Posterior cingulate gyrus (tissue), 11 donors: ENCODE measurements at regions of chr13 and their contacts with region 1.

Region 1: DNA sequence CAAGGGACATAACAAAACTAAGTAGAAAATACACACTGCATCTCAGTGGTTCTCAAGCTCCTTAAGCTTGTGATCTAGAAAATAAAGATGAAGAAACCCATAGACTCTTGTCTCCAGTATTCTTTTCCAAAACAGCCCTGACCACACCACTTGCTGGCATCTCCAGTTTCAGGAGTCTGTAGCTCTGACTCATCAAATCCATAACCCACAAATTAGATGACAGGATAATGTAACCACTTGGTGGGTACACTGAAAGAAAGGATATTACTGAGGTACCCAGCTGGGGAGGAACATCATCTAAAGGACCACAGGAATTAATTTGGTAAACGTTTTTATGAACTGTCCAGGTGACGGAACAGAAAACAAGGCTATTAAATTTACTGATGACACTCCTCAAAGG is 214.7 kb downstream of the VWA8 start:
- DNase-seq: no peak

Region 2: DNA sequence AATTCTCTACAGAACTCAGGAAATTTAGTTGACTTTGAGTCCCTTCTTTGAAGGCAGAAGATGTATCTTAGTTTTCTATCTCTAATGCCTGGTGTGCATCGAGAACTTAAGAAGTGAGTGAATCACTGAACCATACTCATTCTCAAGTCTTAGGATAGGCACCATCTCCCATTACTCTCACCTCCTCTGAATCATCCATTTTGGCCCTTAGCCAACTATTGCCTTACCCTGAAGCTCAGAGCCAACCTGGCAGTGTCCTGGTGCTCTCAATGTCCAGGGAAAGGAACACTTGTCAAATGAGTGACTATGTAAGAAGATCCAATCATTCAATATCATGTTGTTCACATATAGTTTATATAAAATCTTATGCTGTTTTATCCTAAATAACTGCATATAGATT is 142.3 kb before region 1 on chr13:
- intact Hi-C with region 1: no loop called
- DNase-seq: no peak

Region 3: GRCh38 chr13:41780715-41781706 is 34.8 kb after region 1 on chr13:
- intact Hi-C with region 1: loop called (anchors 2 kb)
- DNase-seq: no peak